ENCODE measurements at regions of chr6 and their contacts with region 1.

Region 1: GRCh38 chr6:32971581-32972352 is 3.4 kb downstream of the BRD2 start:
- DNase-seq: peak; percentile 100
- H3K4me3 ChIP-seq: peak overlapping the region; percentile 99
- H3K27ac ChIP-seq: peak overlapping the region; percentile 100
- H3K27me3 ChIP-seq: no peaks in the 10 kb centered on the region
- CTCF ChIP-seq: 0 out of 2 replicates have a peak, but pooled peaks have one; percentile 14

Region 2: DNA sequence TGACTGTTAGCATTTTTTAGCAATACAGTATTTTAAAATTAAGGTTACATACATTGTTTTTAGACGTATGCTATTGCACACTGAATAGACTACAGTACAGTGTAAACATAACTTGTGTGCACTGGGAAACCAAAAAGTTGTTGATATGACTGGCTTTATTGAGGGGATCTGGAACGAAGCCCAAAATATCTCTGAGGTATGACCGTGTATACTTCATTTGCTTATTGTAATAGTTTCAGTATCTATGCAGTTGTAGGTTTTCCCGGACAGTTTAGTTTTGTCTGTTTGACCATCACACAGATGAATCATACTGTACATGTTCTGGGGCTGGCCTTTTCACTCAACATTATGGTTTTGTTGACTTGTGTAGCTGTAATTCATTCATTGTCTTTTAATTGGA is 1063.0 kb before region 1 on chr6:
- CTCF ChIA-PET with region 1: no interaction called
- POLR2A ChIA-PET with region 1: interaction called, 11 read pairs
- DNase-seq: peak; percentile 76
- H3K4me3 ChIP-seq: no peak overlapping the region
- H3K27ac ChIP-seq: peak overlapping the region; percentile 65
- H3K27me3 ChIP-seq: no peaks in the 10 kb centered on the region
- CTCF ChIP-seq: no peak

Region 3: GRCh38 chr6:32843979-32844838 is 127.6 kb before region 1 on chr6 and contains the start of gene PSMB8:
- CTCF ChIA-PET with region 1: interaction called, 17 read pairs
- POLR2A ChIA-PET with region 1: interaction called, 25 read pairs
- DNase-seq: peak; percentile 72
- H3K4me3 ChIP-seq: peak within 1 kb of the TSS; percentile 85
- H3K27ac ChIP-seq: peak within 1 kb of the TSS; percentile 73
- H3K27me3 ChIP-seq: no peaks in the 10 kb centered on the region
- CTCF ChIP-seq: peak; percentile 42
- polyA plus RNA-seq, gene PSMB8: 62.0 and 70.0 TPM in 2 replicates

Region 4: DNA sequence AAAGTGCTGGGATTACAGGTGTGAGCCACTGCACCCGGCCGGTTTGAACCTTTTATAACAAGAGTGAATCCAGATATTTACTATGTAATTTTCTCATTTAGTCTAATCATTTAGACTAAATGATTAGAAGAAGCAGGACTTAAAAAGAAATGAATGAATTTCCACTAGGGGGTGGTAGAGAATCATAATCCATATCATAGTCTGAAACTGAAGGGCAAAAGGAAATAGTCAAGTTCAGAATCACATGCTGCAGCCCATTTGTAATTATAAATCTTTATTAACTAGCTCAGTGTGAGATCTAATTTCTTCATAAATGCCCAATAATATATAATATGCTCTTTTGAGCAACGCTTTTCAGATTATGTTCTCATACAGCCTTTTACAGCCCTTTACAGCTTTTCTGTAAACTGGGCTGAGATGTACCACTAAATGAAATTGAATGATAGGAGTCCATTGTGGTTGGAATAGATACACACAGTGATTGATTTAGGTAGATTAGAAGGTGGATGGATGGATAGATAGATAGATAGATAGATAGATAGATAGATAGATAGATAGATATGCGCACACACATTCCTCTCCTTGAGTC is 86.0 kb before region 1 on chr6:
- CTCF ChIA-PET with region 1: interaction called, 21 read pairs
- POLR2A ChIA-PET with region 1: interaction called, 19 read pairs
- DNase-seq: no peak
- H3K4me3 ChIP-seq: no peak overlapping the region
- H3K27ac ChIP-seq: no peak overlapping the region
- H3K27me3 ChIP-seq: peaks cover 2% of the 10 kb centered on the region
- CTCF ChIP-seq: peak; percentile 63

Region 5: GRCh38 chr6:32940656-32941213 is 31.0 kb before region 1 on chr6 and contains the start of gene HLA-DMB:
- CTCF ChIA-PET with region 1: interaction called, 3 read pairs
- POLR2A ChIA-PET with region 1: interaction called, 48 read pairs
- DNase-seq: peak; percentile 29
- H3K4me3 ChIP-seq: no peak within 1 kb of the TSS
- H3K27ac ChIP-seq: no peak within 1 kb of the TSS
- H3K27me3 ChIP-seq: peaks cover 20% of the 10 kb centered on the region
- CTCF ChIP-seq: no peak
- polyA plus RNA-seq, gene HLA-DMB: 0.07 and 0.12 TPM in 2 replicates

Region 6: GRCh38 chr6:32984605-32985389 is 13.0 kb after region 1 on chr6:
- CTCF ChIA-PET with region 1: interaction called, 35 read pairs
- POLR2A ChIA-PET with region 1: interaction called, 199 read pairs
- DNase-seq: peak; percentile 63
- H3K4me3 ChIP-seq: no peak overlapping the region
- H3K27ac ChIP-seq: no peak overlapping the region
- H3K27me3 ChIP-seq: peaks cover 3% of the 10 kb centered on the region
- CTCF ChIP-seq: peak; percentile 92

Region 7: GRCh38 chr6:33271458-33272274 is 299.9 kb after region 1 on chr6 and contains the starts of genes RPS18 and VPS52:
- CTCF ChIA-PET with region 1: no interaction called
- POLR2A ChIA-PET with region 1: interaction called, 11 read pairs
- DNase-seq: peak; percentile 98
- H3K4me3 ChIP-seq: peak within 1 kb of the TSS; percentile 94
- H3K27ac ChIP-seq: peak within 1 kb of the TSS; percentile 94
- H3K27me3 ChIP-seq: no peaks in the 10 kb centered on the region
- CTCF ChIP-seq: no peak
- polyA plus RNA-seq, gene RPS18: 5,380 and 5,823 TPM in 2 replicates
- polyA plus RNA-seq, gene VPS52: 58.0 and 60.4 TPM in 2 replicates

Measured in AG04450 (cell line).